K562 (cell line): ENCODE measurements at regions of chr9 and their contacts with region 1.

Region 1: DNA sequence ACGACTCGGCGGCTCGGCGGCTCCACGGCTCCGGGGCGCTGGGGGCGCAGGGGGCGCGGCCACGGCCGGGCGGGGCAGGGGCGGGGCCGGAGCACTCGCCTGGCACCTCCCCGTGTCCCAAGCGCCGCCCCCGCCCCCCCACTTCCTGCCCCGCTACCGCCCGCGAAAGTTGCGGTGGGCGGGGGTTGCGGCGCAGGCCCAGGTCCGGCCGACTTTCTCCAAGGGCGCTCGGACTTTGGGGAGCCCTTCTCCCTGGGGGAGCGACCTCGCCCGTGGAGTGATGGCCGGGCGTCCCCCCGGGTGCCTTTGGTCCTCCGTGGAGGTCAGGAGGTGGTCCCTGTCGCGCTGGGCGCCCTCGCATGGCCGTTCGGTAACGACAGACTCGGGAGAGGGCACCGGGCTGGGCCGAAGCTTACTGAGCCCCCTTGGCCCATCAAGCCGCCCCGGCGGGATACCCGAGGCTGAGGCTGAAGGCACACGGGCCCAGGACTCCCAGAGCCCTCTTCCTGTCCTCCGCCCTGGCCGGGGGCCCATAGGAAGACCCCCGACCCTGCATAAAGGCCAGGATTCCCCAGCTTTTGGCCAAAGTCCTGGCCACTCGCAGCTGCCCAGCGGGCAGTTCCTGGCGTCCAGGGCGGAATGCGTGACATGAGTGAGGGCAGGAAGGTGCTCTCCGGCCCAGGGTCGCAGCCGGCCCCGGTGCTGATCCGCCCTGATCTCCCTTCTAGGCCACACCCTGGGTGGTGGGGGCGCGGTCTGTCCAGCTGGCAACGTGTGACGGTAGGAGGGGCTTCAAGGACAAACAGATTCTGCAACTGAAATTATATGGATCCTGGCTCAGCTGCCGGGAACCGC is 883 bp upstream of the VAV2 start:
- DNase-seq: peak; percentile 80 to 93 (median 91)
- ATAC-seq: peak; percentile 88
- H3K4me3 ChIP-seq: peak overlapping the region; percentile 68
- H3K27ac ChIP-seq: peak overlapping the region; percentile 63
- H3K4me1 ChIP-seq: peaks cover 0 to 41% of the 10 kb centered on the region in 2 experiments; a peak in 3 of 5 replicates
- H3K27me3 ChIP-seq: peaks cover 0 to 27% of the 10 kb centered on the region in 2 experiments; a peak in 3 of 5 replicates
- CTCF ChIP-seq: peak; percentile 42 to 59 (median 52); a peak in 4 of 6 replicates
- EP300 ChIP-seq: no peak
- POLR2A ChIP-seq: peak; percentile 63
- RAD21 ChIP-seq: peak; percentile 39 to 43

Region 2: DNA sequence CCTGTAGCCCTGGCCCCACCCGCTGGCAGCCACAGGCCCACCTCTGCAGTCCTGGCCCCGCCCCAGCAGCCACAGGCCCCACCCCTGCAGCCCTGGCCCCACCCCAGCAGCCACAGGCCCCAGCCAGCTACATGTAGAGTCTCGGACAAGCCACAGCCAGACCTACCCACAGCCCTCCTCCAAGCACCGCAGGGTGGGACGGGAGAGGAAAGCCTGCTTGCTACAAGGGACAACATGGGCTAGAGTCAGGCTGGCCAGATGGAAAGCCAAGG is 205.3 kb before region 1 on chr9:
- CTCF ChIA-PET with region 1: interaction called, 44 read pairs
- POLR2A ChIA-PET with region 1: interaction called, 4 read pairs
- in situ Hi-C with region 1: loop called (anchors 5 kb)
- intact Hi-C with region 1: no loop called
- DNase-seq: peak; percentile 41 to 88 (median 82)
- ATAC-seq: peak; percentile 98
- H3K4me3 ChIP-seq: no peak overlapping the region
- H3K27ac ChIP-seq: no peak overlapping the region
- H3K4me1 ChIP-seq: peaks cover 0 to 12% of the 10 kb centered on the region in 2 experiments; a peak in 2 of 5 replicates
- H3K27me3 ChIP-seq: peaks cover 0 to 35% of the 10 kb centered on the region in 2 experiments; a peak in 3 of 5 replicates
- CTCF ChIP-seq: no peak
- EP300 ChIP-seq: no peak
- POLR2A ChIP-seq: no peak
- RAD21 ChIP-seq: no peak

Region 3: GRCh38 chr9:133792721-133793470 is 200.1 kb before region 1 on chr9:
- CTCF ChIA-PET with region 1: interaction called, 44 read pairs
- POLR2A ChIA-PET with region 1: no interaction called
- in situ Hi-C with region 1: loop called (anchors 5 kb)
- intact Hi-C with region 1: loop called (anchors 1 kb)
- DNase-seq: peak; percentile 71 to 87 (median 84)
- ATAC-seq: peak; percentile 96
- H3K4me3 ChIP-seq: no peak overlapping the region
- H3K27ac ChIP-seq: no peak overlapping the region
- H3K4me1 ChIP-seq: peaks cover 0 to 17% of the 10 kb centered on the region in 2 experiments; a peak in 2 of 5 replicates
- H3K27me3 ChIP-seq: peaks cover 2 to 49% of the 10 kb centered on the region in 2 experiments; a peak in 4 of 5 replicates
- CTCF ChIP-seq: peak; percentile 88 to 89 (median 88)
- EP300 ChIP-seq: no peak
- POLR2A ChIP-seq: no peak
- RAD21 ChIP-seq: peak; percentile 92 to 93

Region 4: DNA sequence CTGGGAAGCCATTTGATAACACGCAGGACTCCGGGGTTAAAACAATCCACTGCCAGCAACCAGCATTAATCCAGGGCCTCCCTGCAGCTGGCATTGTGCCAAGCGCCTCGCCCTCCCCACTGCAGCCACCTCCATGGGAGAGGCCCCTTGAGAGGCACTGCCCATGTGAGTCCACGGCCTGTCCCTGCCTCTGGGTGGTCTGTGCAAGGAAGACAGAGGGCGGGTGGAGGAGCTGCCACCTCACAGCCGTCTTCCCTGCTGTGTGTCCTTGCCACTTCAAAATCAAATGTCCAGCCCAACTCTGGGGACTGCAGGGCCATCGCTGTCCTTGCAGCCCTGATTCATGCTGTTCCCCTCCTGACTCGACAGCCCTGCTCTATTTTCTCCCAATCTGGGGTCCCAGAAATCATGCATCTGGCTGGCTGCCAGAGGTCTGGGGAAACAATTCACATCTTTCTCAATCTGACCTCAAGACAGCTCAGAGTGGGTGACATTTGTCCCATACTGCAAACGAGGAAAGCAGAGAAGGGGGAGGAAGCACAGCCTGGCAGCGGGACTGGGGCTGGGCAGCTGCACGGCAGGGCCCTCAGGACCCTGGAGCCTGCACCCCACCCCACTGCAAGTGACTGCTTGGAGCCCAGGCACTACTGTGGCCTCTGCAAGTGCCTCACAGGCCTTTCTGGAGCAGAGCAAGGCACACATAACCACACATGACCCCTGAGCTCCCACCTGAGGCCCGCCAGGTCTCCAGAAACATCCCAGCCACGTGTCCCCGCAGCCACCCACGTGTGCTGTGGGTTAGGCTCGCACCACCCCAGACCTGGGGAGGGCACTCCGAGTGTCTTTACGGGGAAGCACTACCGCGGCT is 48.0 kb after region 1 on chr9:
- CTCF ChIA-PET with region 1: no interaction called
- POLR2A ChIA-PET with region 1: no interaction called
- in situ Hi-C with region 1: no loop called
- intact Hi-C with region 1: no loop called
- DNase-seq: no peak
- ATAC-seq: no peak
- H3K4me3 ChIP-seq: no peak overlapping the region
- H3K27ac ChIP-seq: no peak overlapping the region
- H3K4me1 ChIP-seq: peaks cover 0 to 20% of the 10 kb centered on the region in 2 experiments; a peak in 2 of 5 replicates
- H3K27me3 ChIP-seq: no peaks in the 10 kb centered on the region
- CTCF ChIP-seq: no peak
- EP300 ChIP-seq: no peak
- POLR2A ChIP-seq: no peak
- RAD21 ChIP-seq: no peak

Region 5: DNA sequence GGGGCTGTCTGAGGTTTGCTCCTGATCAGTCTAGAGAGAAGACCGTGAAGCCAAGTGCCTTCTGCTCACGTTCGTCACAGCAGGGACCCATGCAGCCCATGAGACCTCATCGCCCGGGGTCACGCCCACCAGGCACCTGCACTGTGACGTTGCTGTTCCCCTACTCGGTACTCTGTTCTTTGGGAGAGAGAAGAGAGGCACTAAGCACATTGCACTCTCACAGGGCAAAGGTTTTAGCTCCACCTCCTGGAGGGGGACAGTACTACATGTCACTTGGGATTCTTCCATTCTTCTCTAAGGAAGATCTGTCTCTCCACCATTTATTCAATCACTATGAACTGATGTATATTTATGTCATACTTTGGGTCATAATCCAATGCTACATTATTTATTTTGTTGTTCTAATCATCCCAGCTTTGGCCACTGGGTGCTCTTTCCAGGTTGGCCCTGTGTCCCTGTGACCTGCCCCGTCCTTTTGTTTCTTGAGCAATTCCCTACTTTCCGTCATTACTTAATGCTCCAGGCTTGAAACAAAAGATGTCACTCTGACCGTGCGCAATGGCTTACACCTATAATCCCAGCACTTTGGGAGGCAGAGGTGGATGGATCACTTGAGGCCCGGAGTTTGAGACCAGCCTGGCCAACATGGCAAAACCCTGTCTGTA is 106.2 kb after region 1 on chr9:
- CTCF ChIA-PET with region 1: no interaction called
- POLR2A ChIA-PET with region 1: no interaction called
- in situ Hi-C with region 1: no loop called
- intact Hi-C with region 1: loop called (anchors 1 kb)
- DNase-seq: peak; percentile 69 to 78 (median 74)
- ATAC-seq: peak; percentile 94
- H3K4me3 ChIP-seq: no peak overlapping the region
- H3K27ac ChIP-seq: no peak overlapping the region
- H3K4me1 ChIP-seq: no peaks in the 10 kb centered on the region
- H3K27me3 ChIP-seq: peaks cover 20 to 37% of the 10 kb centered on the region in 2 experiments; a peak in 4 of 5 replicates
- CTCF ChIP-seq: peak; percentile 81 to 94 (median 93)
- EP300 ChIP-seq: no peak
- POLR2A ChIP-seq: no peak
- RAD21 ChIP-seq: peak; percentile 67 to 93

Region 6: GRCh38 chr9:134365791-134366688 is 373.0 kb after region 1 on chr9:
- CTCF ChIA-PET with region 1: no interaction called
- POLR2A ChIA-PET with region 1: no interaction called
- in situ Hi-C with region 1: no loop called
- intact Hi-C with region 1: no loop called
- DNase-seq: peak in 3 of 4 experiments; percentile 45 to 68 (median 67)
- ATAC-seq: peak; percentile 72
- H3K4me3 ChIP-seq: no peak overlapping the region
- H3K27ac ChIP-seq: no peak overlapping the region
- H3K4me1 ChIP-seq: peaks cover 5 to 95% of the 10 kb centered on the region in 2 experiments; a peak in 3 of 5 replicates
- H3K27me3 ChIP-seq: no peaks in the 10 kb centered on the region
- CTCF ChIP-seq: no peak
- EP300 ChIP-seq: no peak
- POLR2A ChIP-seq: no peak
- RAD21 ChIP-seq: no peak